OCI-LY7 (cell line): ENCODE measurements at regions of chr1 and their contacts with region 1.

Region 1: GRCh38 chr1:97814121-97814520 is 106.7 kb downstream of the DPYD start:
- DNase-seq: no peak
- H3K4me3 ChIP-seq: no peak overlapping the region
- H3K27ac ChIP-seq: no peak overlapping the region
- H3K4me1 ChIP-seq: no peaks in the 10 kb centered on the region
- CTCF ChIP-seq: no peak

Region 2: GRCh38 chr1:96966536-96967138 is 847.5 kb before region 1 on chr1:
- CTCF ChIA-PET with region 1: no interaction called
- POLR2A ChIA-PET with region 1: no interaction called
- intact Hi-C with region 1: loop called (anchors 10 kb)
- DNase-seq: peak; percentile 51
- H3K4me3 ChIP-seq: no peak overlapping the region
- H3K27ac ChIP-seq: no peak overlapping the region
- H3K4me1 ChIP-seq: no peaks in the 10 kb centered on the region
- CTCF ChIP-seq: peak; percentile 87

Region 3: DNA sequence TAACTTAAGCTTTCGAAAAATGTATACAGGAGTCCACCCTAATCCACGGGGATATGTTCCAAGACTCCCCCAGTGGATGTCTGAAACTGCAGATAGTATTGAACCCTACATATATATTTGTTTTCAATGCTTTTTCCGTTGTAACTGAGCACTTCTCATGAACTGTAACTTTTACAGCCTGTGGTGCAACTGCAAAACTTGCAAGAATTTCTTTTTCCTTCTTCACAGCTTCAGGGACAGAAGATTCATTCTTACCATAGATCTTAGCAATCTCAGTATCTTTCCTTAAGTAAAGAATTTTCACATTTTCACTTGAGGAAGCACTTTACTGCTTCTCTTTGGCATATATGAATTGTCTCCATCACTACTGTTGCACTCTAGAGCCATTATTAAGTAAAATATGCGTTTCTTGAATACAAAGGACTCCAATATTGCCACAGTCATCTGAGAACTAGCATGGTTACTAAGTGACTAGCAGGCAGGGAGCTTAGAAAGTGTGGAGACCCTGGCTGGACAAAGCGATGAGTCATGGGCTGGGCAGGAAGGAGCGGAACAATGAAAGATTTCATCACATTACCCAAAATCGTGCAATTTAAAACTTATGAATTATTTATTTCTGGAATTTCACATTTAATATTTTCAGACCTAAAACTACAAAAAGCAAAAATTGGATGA is 92.6 kb after region 1 on chr1:
- CTCF ChIA-PET with region 1: no interaction called
- POLR2A ChIA-PET with region 1: no interaction called
- intact Hi-C with region 1: no loop called
- DNase-seq: no peak
- H3K4me3 ChIP-seq: no peak overlapping the region
- H3K27ac ChIP-seq: no peak overlapping the region
- H3K4me1 ChIP-seq: no peaks in the 10 kb centered on the region
- CTCF ChIP-seq: no peak